ENCODE measurements at regions of chr9 and their contacts with region 1.

Region 1: GRCh38 chr9:134024828-134025605 is at the start of gene BRD3OS:
- DNase-seq: peak; percentile 97
- H3K4me3 Mint-ChIP-seq: peak within 1 kb of the TSS; percentile 83
- H3K27ac Mint-ChIP-seq: peak within 1 kb of the TSS; percentile 79
- H3K4me1 Mint-ChIP-seq: peaks cover 4% of the 10 kb centered on the region
- H3K27me3 Mint-ChIP-seq: no peaks in the 10 kb centered on the region
- total RNA-seq, gene BRD3OS: 12.6 and 14.9 TPM in 2 replicates

Region 2: DNA sequence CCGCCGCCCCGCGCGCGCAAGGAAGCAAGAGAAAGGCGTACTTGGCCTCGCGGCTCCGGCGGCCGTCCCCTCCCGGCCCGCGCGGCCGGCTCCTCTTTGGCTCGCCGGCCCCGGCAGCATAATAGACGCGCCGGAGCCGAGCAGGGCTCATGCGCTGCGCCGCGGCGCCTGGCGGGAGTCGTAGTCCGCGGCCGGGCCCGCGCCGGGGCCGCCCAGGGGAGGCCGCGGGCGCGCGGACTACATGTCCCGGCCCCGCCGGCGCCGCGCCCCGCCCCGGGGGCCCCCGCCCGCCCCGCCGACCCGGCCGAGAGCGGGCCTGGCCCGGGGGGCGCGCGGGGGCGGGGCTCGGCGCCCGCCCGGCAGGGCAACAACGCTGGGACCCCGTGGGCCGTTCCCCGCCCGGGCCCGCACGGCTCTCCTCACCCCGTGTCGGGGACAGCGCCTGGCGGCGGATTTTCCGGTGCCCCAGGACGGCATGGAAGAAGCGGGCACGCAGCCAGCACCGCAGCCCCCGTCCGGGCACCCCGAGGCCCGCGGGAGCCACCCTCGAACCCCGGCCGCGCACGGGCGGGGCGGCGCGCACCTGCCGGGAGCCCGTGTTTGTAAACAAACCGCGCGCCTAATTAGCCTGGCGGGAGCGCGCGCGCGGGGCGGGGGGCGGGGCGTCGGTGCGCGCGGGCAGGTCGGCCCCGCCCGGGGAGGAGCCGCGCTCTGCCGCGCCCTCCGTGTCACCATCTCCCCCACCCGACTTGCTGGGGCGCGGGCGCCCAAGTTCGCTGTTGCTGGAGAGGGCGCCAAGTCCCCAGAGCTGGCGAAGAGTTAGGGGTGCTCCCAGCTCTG is 43.1 kb after region 1 on chr9 and contains the start of gene BRD3:
- intact Hi-C with region 1: loop called (anchors 1 kb)
- DNase-seq: peak; percentile 96
- H3K4me3 Mint-ChIP-seq: peak within 1 kb of the TSS; percentile 95
- H3K27ac Mint-ChIP-seq: peak within 1 kb of the TSS; percentile 98
- H3K4me1 Mint-ChIP-seq: peaks cover 24% of the 10 kb centered on the region
- H3K27me3 Mint-ChIP-seq: peaks cover 24% of the 10 kb centered on the region
- total RNA-seq, gene BRD3: 32.3 and 40.9 TPM in 2 replicates

Region 3: DNA sequence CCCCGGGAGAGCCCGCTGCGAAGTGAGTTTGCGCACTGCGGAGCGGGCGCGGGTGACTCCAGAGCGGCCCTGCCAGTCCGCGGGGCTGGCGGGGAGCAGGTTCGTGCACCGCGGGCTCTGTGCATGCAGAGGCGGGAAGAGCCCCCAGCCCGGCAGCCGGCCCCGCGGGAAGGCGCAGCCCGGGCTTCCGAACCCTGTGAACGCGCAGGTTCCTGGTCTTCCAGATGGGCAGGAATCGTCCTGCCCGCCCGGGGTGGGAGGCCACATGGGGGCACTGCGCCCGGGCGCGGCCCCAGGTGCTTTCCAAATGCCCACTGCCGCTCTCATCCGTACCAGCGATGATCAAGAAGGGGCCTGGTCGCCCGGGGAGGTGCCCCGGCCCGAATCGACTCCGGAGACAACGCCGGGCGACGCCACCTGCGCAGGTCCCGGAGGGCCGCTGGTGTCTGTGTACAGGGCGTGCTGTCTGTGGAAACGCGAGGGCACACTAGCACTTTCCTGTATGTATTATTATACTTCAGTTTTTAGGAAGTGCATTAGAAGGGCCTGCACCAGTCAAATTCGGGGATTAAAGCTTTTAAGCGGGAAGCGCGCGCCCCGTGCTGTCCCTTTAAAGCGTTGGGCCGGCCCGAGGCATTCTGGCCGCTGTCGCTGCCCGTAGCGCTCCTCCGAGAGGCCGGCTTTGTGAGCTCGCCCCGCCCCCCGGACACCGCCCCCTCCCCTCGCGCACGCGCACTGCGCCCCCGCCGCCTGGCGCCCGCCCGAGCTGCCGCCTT is 110.5 kb after region 1 on chr9 and contains the start of gene WDR5:
- intact Hi-C with region 1: loop called (anchors 5 kb)
- DNase-seq: peak; percentile 96
- H3K4me3 Mint-ChIP-seq: peak within 1 kb of the TSS; percentile 96
- H3K27ac Mint-ChIP-seq: peak within 1 kb of the TSS; percentile 94
- H3K4me1 Mint-ChIP-seq: peaks cover 29% of the 10 kb centered on the region
- H3K27me3 Mint-ChIP-seq: no peaks in the 10 kb centered on the region
- total RNA-seq, gene WDR5: 71.2 TPM in 2 replicates

Region 4: DNA sequence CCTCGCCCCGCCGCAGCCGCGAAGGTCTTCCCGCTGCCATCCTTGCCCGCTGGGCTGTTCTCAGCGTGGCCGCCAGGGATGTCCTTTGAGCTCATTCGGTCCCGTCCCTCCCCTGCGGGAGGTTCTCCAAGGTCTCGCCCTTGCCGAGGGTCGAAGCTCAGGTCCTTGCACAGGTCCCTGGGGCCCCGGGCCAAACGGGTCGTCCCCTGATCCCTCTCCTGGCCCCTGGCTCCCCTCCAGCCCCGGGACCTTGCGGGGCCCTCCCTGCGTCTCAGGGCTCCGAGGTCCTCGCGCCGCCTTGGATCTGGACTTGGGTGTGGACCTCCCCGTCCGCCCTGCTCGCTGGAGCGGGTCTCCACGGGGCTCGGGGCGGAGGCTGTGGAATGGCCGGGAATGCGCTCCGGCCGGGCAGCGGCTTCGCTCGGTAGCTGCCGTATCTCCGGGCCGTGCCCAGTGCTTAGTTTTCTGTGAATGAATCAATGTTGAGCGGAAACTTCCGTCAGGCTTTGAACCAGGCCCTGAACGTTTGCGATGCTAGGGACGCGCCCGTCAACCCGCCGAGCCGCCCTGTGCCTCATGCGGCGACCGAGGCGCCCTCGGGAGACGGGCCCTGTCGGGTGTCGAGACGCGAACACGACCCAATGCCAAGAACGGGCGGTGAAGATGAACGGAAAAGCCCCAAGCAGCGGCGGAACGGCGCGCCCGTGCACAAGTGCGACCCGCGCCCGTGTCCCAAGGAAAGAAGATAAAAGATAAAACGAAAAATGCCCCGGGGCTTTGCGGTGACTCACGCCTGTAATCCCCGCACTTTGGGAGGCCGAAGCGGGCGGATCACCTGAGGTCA is 138.6 kb after region 1 on chr9:
- intact Hi-C with region 1: loop called (anchors 1 kb)
- DNase-seq: peak; percentile 89
- H3K4me3 Mint-ChIP-seq: no peak overlapping the region
- H3K27ac Mint-ChIP-seq: no peak overlapping the region
- H3K4me1 Mint-ChIP-seq: peaks cover 20% of the 10 kb centered on the region
- H3K27me3 Mint-ChIP-seq: no peaks in the 10 kb centered on the region

Region 5: DNA sequence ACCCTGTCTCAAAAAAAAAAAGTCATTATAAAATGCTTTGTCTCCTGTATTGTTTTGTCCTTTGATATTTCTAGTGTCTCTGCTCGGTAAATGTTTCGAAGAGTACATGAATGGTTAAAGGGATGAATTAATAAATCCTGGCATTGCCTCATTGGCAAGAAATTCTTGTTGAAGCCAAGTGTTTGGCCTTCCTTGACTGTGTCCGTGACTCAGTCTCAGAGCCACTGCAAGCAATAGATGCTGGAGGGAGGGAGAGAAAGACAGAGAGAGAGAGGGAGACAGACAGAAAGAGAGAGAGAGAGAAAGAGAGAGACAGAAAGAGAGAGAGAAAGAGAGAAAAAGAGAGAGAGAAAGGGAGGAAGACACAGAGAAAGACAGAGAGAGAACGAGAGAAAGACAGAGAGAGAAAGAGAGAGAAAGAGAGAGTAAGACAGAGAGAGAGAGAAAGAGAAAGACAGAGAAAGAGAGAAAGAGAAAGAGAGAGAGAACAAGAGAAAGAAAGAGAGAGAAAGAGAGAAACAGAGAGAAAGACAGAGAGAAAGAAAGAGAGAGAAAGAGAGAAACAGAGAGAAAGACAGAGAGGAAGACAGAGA is 228.7 kb after region 1 on chr9:
- intact Hi-C with region 1: no loop called
- DNase-seq: no peak
- H3K4me3 Mint-ChIP-seq: no peak overlapping the region
- H3K27ac Mint-ChIP-seq: no peak overlapping the region
- H3K4me1 Mint-ChIP-seq: no peaks in the 10 kb centered on the region
- H3K27me3 Mint-ChIP-seq: no peaks in the 10 kb centered on the region

Region 6: DNA sequence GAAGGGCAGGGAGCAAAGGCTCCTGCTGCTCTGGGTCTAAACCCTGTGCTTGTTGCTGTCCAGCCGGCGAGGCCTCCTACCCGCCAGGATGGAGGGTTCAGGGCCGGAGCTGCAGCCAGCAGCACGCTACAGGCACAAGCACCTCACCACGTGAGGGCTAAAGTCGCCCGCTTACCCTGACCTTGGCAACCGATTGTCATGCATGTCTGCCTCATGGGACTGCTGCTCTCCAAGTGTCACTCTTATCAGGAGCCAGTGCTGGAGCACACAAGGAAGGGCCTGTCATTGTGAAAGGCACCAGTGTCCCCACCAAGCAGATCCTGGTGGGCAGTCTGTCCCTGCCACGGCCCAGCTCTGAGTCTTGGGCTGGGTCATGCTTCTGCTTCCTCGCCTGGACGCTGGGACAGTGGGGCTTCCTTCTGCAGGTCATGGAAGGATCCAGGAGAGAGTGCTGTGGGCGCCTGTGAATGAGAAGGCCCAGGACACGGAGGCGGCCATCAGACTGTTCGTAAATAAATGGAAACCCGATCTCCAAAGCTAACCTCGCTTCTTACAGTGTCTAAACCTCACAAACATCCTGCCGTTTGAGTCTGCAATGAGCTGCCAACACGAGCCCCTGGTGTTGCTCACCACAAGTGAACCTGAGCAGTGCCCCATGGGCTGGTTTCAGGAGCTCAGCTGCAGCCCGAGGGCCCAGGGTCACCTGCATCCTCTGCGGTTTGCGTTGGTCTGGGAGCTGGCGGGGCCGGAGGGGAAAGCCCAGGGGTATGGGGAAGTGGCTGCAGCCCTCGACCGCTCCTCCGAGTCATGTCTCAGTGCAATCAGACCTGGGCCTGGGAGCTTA is 243.1 kb after region 1 on chr9:
- intact Hi-C with region 1: no loop called
- DNase-seq: no peak
- H3K4me3 Mint-ChIP-seq: no peak overlapping the region
- H3K27ac Mint-ChIP-seq: no peak overlapping the region
- H3K4me1 Mint-ChIP-seq: no peaks in the 10 kb centered on the region
- H3K27me3 Mint-ChIP-seq: peaks cover 11% of the 10 kb centered on the region